ENCODE measurements at regions of chr13 and their contacts with region 1.

Region 1: GRCh38 chr13:32427852-32428580 is at the start of gene N4BP2L1:
- DNase-seq: peak; percentile 74
- H3K4me3 Mint-ChIP-seq: peak within 1 kb of the TSS; percentile 97
- H3K27ac Mint-ChIP-seq: peak within 1 kb of the TSS; percentile 98
- H3K4me1 Mint-ChIP-seq: peaks cover 53% of the 10 kb centered on the region
- H3K27me3 Mint-ChIP-seq: no peaks in the 10 kb centered on the region
- total RNA-seq, gene N4BP2L1: 17.7 and 20.0 TPM in 2 replicates

Region 2: DNA sequence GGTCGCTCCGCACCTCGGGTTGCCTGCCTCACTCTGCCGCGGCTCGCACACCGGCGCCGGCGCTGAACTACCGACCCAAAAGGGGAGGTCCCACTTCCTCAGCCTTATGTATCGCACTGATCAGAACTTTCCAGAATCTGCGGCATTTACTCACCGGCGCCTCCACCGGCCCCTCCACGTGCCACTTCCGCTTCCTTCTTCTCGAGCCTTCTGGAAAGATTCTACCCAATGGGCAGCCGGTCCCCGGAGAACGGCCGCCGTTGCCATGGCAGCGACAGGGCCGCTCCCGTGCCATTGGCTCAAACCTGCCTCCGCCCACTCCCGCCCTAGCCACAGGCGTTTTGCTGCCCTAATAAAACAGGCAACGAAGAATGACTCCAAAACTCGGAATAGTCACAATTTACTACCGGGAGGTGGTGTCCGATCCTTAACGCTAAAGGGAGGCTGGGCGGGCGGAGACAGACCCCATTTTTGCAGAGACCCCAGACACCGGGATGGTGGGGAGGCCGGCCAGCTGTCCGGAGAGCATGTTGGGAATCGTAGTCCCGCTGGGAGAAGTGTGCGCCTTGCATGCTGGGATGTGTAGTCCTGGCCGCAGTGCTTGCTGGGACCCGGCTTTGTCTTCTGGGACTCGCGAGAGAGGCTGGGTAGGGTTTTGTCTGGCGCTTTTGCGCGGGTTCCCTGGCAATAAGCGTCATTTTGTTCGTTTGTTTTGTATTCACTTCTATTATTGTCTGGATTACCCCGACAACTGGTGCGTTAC is 1266.0 kb before region 1 on chr13 and contains the start of gene HSPH1:
- intact Hi-C with region 1: loop called (anchors 5 kb)
- DNase-seq: peak; percentile 99
- H3K4me3 Mint-ChIP-seq: peak within 1 kb of the TSS; percentile 98
- H3K27ac Mint-ChIP-seq: peak within 1 kb of the TSS; percentile 96
- H3K4me1 Mint-ChIP-seq: peaks cover 44% of the 10 kb centered on the region
- H3K27me3 Mint-ChIP-seq: no peaks in the 10 kb centered on the region
- total RNA-seq, gene HSPH1: 310 and 326 TPM in 2 replicates

Region 3: DNA sequence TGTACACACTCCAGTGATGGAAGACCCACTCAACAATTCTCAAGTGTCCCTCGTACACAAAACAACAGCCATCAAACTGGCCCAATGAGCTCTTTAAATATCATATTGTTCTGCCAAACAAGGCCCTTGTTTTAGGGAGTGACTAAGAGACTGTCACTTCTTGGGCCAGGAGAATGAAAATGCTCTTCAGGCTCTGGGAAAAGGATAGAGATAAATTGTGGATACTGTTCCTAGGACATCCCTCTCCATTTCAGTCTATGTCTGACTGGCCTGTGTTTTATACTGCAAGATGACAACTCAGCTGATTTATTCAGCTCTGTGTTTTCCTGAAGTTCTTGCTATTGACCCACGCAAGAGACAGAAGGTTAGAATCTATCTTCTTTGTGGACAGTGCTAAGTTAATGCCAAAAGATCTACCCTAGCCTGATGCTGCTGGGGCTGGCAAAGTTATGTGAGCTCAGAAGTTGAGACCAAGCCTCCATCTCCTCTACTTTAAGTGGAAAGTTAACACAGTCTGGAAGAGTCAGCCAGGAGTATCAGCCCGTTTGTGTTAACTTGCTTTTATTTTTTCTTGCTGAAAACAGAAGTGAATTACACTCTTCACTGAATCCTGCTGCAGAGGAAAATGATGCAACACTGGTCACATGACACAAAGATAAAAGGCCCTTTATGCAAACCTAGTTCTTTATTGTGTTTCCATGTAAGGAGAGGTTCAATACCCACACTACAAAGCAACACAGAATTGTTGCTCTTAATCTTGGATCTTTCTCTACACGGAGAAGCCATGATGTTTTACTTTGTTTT is 381.8 kb before region 1 on chr13:
- intact Hi-C with region 1: loop called (anchors 5 kb)
- DNase-seq: peak; percentile 9
- H3K4me3 Mint-ChIP-seq: peak overlapping the region; percentile 43
- H3K27ac Mint-ChIP-seq: peak overlapping the region; percentile 79
- H3K4me1 Mint-ChIP-seq: peaks cover 68% of the 10 kb centered on the region
- H3K27me3 Mint-ChIP-seq: no peaks in the 10 kb centered on the region

Region 4: DNA sequence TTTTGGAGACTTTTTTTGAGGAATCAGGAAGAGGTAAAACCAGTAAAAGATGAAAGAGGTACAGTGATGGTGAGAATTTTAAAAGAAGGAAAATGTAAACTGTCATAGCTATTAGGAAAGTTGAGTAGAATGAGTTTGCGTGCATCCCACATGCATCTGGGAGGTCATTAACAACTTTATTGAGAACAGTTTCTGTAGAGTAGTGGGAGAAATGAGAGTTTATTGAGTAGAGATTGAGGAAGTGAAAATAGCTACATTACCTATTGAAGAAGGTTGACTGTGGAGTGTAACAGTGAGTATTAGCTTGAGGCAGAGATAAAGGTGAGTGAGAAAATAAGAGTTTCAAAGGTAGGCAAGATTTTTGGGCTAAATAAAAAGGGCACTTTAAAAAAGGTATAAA is 74.0 kb before region 1 on chr13:
- intact Hi-C with region 1: no loop called
- DNase-seq: no peak
- H3K4me3 Mint-ChIP-seq: no peak overlapping the region
- H3K27ac Mint-ChIP-seq: no peak overlapping the region
- H3K4me1 Mint-ChIP-seq: peaks cover 9% of the 10 kb centered on the region
- H3K27me3 Mint-ChIP-seq: no peaks in the 10 kb centered on the region

Region 5: DNA sequence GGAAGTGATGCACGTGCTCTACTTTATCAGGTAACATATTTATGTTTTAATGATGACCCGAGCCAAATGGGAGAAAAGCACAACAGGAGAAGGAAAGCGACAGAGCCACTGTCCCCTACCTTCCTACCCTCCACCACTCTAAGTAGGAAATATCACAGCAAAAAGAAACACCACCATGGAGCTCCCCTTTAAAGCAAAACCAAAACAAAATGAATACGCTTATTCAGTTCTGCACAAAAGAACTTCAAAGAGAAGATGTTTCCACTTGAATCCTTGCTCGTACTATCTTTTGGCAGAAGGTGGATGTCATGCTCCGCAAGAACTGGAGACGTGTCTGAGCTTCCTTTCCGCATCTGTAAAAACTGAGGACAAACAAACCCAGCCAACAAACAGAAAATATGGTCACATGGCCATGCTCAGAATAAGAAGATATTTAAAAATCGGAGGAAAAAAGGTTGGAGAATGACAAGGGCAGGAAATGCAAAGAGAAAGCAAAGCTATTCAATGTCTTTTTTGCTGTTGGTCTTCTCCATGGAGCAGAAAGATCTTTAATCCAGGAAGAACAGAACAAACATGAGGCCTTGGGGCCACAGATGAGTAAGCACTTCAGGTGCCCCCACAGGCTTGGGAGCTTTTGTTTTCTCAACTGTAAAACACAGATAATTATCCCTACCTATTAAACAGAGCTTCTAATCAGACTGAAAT is 19.6 kb before region 1 on chr13:
- intact Hi-C with region 1: loop called (anchors 1 kb)
- DNase-seq: no peak
- H3K4me3 Mint-ChIP-seq: peak overlapping the region; percentile 74
- H3K27ac Mint-ChIP-seq: peak overlapping the region; percentile 82
- H3K4me1 Mint-ChIP-seq: peaks cover 28% of the 10 kb centered on the region
- H3K27me3 Mint-ChIP-seq: no peaks in the 10 kb centered on the region

Region 6: GRCh38 chr13:32538621-32539246 is 110.7 kb after region 1 on chr13 and contains the start of gene N4BP2L2:
- intact Hi-C with region 1: loop called (anchors 1 kb)
- DNase-seq: peak; percentile 88
- H3K4me3 Mint-ChIP-seq: peak within 1 kb of the TSS; percentile 96
- H3K27ac Mint-ChIP-seq: peak within 1 kb of the TSS; percentile 99
- H3K4me1 Mint-ChIP-seq: peaks cover 46% of the 10 kb centered on the region
- H3K27me3 Mint-ChIP-seq: peaks cover 8% of the 10 kb centered on the region
- total RNA-seq, gene N4BP2L2: 87.1 and 92.8 TPM in 2 replicates

Region 7: GRCh38 chr13:33678906-33679657 is 1251.1 kb after region 1 on chr13:
- intact Hi-C with region 1: loop called (anchors 2 kb)
- DNase-seq: peak; percentile 71
- H3K4me3 Mint-ChIP-seq: peak overlapping the region; percentile 73
- H3K27ac Mint-ChIP-seq: peak overlapping the region; percentile 91
- H3K4me1 Mint-ChIP-seq: peaks cover 36% of the 10 kb centered on the region
- H3K27me3 Mint-ChIP-seq: peaks cover 2% of the 10 kb centered on the region

Region 8: GRCh38 chr13:34156841-34157365 is 1728.9 kb after region 1 on chr13:
- intact Hi-C with region 1: loop called (anchors 5 kb)
- DNase-seq: peak; percentile 59
- H3K4me3 Mint-ChIP-seq: peak overlapping the region; percentile 68
- H3K27ac Mint-ChIP-seq: peak overlapping the region; percentile 91
- H3K4me1 Mint-ChIP-seq: peaks cover 37% of the 10 kb centered on the region
- H3K27me3 Mint-ChIP-seq: peaks cover 3% of the 10 kb centered on the region